ENCODE measurements at regions of chr2 and their contacts with region 1.

Region 1: DNA sequence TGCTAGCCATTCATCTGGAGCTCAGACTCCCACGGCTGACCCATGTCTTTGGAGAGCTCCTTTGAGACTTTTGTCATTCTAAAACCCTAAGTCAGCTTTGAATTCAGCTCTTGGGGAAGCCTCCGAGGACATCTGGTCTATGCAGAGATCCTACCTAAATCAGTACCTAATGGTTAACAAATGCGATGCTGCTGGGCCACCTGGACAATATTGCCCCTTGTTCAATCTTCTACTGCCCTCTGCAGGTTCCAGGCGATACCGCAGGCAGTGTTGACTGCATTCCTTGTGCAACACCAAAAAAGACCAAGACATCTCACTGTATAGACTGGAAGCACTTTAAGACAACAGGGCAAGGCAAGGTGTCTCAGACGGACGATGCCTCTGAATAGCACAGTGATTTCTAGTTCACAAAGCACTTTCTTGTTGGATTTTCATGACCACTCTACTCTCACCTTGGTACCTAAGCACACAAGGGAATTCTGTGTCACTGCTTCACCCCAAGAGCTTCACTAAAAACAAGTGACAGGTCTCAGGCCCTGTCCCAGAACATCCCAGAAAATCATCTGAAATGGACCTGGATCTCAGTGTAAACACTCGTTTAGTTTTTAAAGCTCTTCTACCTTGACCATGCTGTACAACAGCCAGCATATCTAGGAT is 80.9 kb downstream of the XDH start:
- DNase-seq: peak; percentile 84
- ATAC-seq: peak; percentile 90
- H3K4me3 ChIP-seq: no peak overlapping the region
- H3K4me3 Mint-ChIP-seq: no peak overlapping the region
- H3K27ac ChIP-seq: no peak overlapping the region
- H3K27ac Mint-ChIP-seq: no peak overlapping the region
- H3K4me1 ChIP-seq: peaks cover 0 to 9% of the 10 kb centered on the region in 2 donors
- H3K4me1 Mint-ChIP-seq: peaks cover 13% of the 10 kb centered on the region
- H3K27me3 ChIP-seq: peaks cover 0 to 6% (median 2%) of the 10 kb centered on the region in 4 experiments
- H3K27me3 Mint-ChIP-seq: peaks cover 5% of the 10 kb centered on the region
- CTCF ChIP-seq: peak; percentile 98

Region 2: GRCh38 chr2:30165050-30165520 is 1168.6 kb before region 1 on chr2:
- CTCF ChIA-PET with region 1: interaction called, 5 read pairs
- POLR2A ChIA-PET with region 1: no interaction called
- intact Hi-C with region 1: loop called (anchors 10 kb)
- DNase-seq: peak; percentile 87
- ATAC-seq: peak; percentile 100
- H3K4me3 ChIP-seq: no peak overlapping the region
- H3K4me3 Mint-ChIP-seq: no peak overlapping the region
- H3K27ac ChIP-seq: no peak overlapping the region
- H3K27ac Mint-ChIP-seq: no peak overlapping the region
- H3K4me1 ChIP-seq: peaks cover 8% of the 10 kb centered on the region in 2 donors
- H3K4me1 Mint-ChIP-seq: peaks cover 16% of the 10 kb centered on the region
- H3K27me3 ChIP-seq: no peaks in the 10 kb centered on the region
- H3K27me3 Mint-ChIP-seq: no peaks in the 10 kb centered on the region
- CTCF ChIP-seq: peak; percentile 85

Region 3: GRCh38 chr2:31089645-31090044 is 244.0 kb before region 1 on chr2:
- CTCF ChIA-PET with region 1: interaction called, 18 read pairs
- POLR2A ChIA-PET with region 1: no interaction called
- intact Hi-C with region 1: loop called (anchors 2 kb)
- DNase-seq: no peak
- ATAC-seq: no peak
- H3K4me3 ChIP-seq: no peak overlapping the region
- H3K4me3 Mint-ChIP-seq: no peak overlapping the region
- H3K27ac ChIP-seq: no peak overlapping the region
- H3K27ac Mint-ChIP-seq: no peak overlapping the region
- H3K4me1 ChIP-seq: no peaks in the 10 kb centered on the region
- H3K4me1 Mint-ChIP-seq: no peaks in the 10 kb centered on the region
- H3K27me3 ChIP-seq: no peaks in the 10 kb centered on the region
- H3K27me3 Mint-ChIP-seq: no peaks in the 10 kb centered on the region
- CTCF ChIP-seq: no peak

Region 4: DNA sequence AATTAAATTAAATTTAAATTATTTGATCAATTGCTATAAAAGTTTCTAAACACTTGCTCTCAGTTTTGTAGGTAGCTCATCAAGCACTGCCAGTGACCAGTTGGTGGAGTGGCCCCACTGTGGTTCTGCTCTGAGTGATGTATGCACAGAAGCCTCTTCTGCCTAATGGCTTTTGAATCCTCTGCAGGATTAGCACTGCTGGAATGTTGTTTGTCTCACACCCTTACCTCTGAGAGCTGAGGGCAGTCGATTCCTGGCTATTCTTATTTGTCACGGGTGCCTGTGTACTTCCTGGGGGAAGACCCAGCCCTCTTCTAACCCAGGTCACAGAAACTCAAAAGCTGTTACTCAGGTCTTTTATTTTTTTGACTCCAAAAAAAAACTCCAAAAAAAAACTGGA is 125.9 kb before region 1 on chr2:
- CTCF ChIA-PET with region 1: interaction called, 13 read pairs
- POLR2A ChIA-PET with region 1: interaction called, 5 read pairs
- intact Hi-C with region 1: no loop called
- DNase-seq: no peak
- ATAC-seq: peak; percentile 36
- H3K4me3 ChIP-seq: no peak overlapping the region
- H3K4me3 Mint-ChIP-seq: no peak overlapping the region
- H3K27ac ChIP-seq: peak overlapping the region in 1 of 2 donors; percentile 23
- H3K27ac Mint-ChIP-seq: no peak overlapping the region
- H3K4me1 ChIP-seq: peaks cover 13 to 16% of the 10 kb centered on the region in 2 donors
- H3K4me1 Mint-ChIP-seq: peaks cover 21% of the 10 kb centered on the region
- H3K27me3 ChIP-seq: no peaks in the 10 kb centered on the region
- H3K27me3 Mint-ChIP-seq: no peaks in the 10 kb centered on the region
- CTCF ChIP-seq: no peak

Region 5: DNA sequence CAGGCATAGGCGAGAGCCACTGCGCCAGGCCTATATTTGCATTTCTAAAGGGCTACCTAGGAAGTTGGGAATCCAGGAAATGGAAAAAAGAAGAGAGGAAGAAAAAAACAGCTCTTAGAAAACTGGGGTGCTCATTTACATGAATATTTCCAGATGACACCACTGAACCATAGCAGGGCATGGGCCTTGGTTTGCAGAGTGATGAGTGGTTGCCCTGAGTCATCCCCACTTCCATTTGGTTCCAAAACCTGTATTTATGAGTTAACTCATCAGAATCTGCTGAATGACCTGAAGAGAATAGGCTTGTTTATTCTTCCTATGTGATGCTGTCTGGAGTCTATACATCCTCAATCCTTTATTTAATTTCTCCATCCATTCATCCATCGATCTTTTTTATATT is 63.5 kb before region 1 on chr2:
- CTCF ChIA-PET with region 1: interaction called, 12 read pairs
- POLR2A ChIA-PET with region 1: interaction called, 5 read pairs
- intact Hi-C with region 1: no loop called
- DNase-seq: no peak
- ATAC-seq: no peak
- H3K4me3 ChIP-seq: no peak overlapping the region
- H3K4me3 Mint-ChIP-seq: no peak overlapping the region
- H3K27ac ChIP-seq: no peak overlapping the region
- H3K27ac Mint-ChIP-seq: peak overlapping the region; percentile 18
- H3K4me1 ChIP-seq: peaks cover 6 to 15% of the 10 kb centered on the region in 2 donors
- H3K4me1 Mint-ChIP-seq: peaks cover 27% of the 10 kb centered on the region
- H3K27me3 ChIP-seq: no peaks in the 10 kb centered on the region
- H3K27me3 Mint-ChIP-seq: peaks cover 5% of the 10 kb centered on the region
- CTCF ChIP-seq: no peak

Region 6: DNA sequence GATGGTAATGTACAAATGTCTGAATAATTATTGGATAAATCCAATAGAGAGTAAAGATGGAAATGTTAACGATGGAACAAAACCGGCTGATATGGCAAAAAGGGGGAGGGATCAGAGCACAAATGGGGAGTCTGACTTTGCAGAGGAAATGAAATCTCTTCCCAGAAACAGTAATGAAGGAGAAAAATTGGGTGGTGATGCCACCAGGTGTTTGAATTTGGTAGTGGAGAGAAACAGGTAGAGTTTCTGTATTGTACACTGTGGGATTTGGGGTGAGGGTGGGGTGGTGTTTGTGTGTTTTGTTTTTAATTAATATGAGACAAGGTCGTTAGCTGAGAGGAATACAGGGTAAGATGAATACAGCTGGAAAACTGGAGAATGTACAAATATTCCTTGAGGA is 101.3 kb after region 1 on chr2:
- CTCF ChIA-PET with region 1: no interaction called
- POLR2A ChIA-PET with region 1: no interaction called
- intact Hi-C with region 1: no loop called
- DNase-seq: no peak
- ATAC-seq: no peak
- H3K4me3 ChIP-seq: no peak overlapping the region
- H3K4me3 Mint-ChIP-seq: no peak overlapping the region
- H3K27ac ChIP-seq: no peak overlapping the region
- H3K27ac Mint-ChIP-seq: no peak overlapping the region
- H3K4me1 ChIP-seq: no peaks in the 10 kb centered on the region
- H3K4me1 Mint-ChIP-seq: no peaks in the 10 kb centered on the region
- H3K27me3 ChIP-seq: peaks cover 0 to 3% (median under 1%) of the 10 kb centered on the region in 4 experiments
- H3K27me3 Mint-ChIP-seq: peaks cover under 1% of the 10 kb centered on the region
- CTCF ChIP-seq: no peak

Region 7: DNA sequence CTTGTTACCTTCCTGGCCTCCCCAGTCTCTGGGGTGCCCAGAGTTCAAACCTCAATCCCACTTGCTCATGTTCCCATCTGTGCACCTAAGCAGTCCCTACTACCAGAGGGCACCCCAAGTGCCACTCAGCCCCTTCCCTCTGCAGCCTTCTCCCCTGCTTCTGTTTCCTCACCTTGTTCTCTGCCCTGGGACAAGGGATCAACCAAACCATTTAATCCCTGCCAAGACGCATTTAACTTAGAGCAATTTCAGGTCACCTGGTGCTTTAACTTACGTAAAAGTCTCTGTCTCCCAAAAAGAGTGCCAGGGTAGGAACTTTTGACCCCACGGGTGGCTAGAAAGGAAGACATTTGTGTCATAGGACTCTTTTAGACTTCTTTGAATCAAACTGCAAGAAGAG is 179.9 kb after region 1 on chr2:
- CTCF ChIA-PET with region 1: no interaction called
- POLR2A ChIA-PET with region 1: no interaction called
- intact Hi-C with region 1: no loop called
- DNase-seq: no peak
- ATAC-seq: no peak
- H3K4me3 ChIP-seq: no peak overlapping the region
- H3K4me3 Mint-ChIP-seq: no peak overlapping the region
- H3K27ac ChIP-seq: no peak overlapping the region
- H3K27ac Mint-ChIP-seq: no peak overlapping the region
- H3K4me1 ChIP-seq: no peaks in the 10 kb centered on the region
- H3K4me1 Mint-ChIP-seq: no peaks in the 10 kb centered on the region
- H3K27me3 ChIP-seq: no peaks in the 10 kb centered on the region
- H3K27me3 Mint-ChIP-seq: peaks cover 22% of the 10 kb centered on the region
- CTCF ChIP-seq: no peak

Region 8: DNA sequence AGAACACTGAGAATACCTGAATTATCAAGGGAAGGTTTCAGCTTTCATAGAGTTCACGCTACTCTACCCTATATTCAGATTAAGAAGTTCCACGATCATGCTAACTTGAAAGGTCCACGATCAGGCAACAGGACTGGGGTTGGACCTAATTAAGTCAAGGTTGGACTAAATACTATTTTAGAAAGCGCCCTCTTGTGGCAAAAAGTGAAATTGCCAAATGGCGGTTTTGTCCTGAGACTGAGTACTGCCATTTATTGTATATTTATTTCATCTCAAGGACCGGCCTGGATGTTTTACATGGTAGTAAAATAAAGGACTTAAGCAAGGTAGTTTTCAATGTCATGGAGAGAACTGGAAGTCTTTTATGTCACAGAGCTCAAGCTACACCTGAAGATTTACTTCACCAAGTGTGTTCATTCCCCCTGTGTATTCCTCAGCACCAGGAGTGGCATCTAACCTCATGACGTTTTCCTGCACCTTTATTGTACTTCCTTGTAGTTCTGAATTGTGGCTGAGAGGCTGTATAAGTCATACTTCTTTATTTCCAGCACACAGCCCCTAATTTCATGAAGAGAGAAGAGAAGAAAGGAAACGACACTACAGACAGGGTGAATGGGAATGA is 190.3 kb after region 1 on chr2:
- CTCF ChIA-PET with region 1: interaction called, 12 read pairs
- POLR2A ChIA-PET with region 1: no interaction called
- intact Hi-C with region 1: no loop called
- DNase-seq: peak; percentile 64
- ATAC-seq: peak; percentile 64
- H3K4me3 ChIP-seq: no peak overlapping the region
- H3K4me3 Mint-ChIP-seq: no peak overlapping the region
- H3K27ac ChIP-seq: no peak overlapping the region
- H3K27ac Mint-ChIP-seq: no peak overlapping the region
- H3K4me1 ChIP-seq: no peaks in the 10 kb centered on the region
- H3K4me1 Mint-ChIP-seq: no peaks in the 10 kb centered on the region
- H3K27me3 ChIP-seq: peaks cover 0 to 6% (median 2%) of the 10 kb centered on the region in 4 experiments
- H3K27me3 Mint-ChIP-seq: peaks cover 37% of the 10 kb centered on the region
- CTCF ChIP-seq: peak; percentile 92

Region 9: DNA sequence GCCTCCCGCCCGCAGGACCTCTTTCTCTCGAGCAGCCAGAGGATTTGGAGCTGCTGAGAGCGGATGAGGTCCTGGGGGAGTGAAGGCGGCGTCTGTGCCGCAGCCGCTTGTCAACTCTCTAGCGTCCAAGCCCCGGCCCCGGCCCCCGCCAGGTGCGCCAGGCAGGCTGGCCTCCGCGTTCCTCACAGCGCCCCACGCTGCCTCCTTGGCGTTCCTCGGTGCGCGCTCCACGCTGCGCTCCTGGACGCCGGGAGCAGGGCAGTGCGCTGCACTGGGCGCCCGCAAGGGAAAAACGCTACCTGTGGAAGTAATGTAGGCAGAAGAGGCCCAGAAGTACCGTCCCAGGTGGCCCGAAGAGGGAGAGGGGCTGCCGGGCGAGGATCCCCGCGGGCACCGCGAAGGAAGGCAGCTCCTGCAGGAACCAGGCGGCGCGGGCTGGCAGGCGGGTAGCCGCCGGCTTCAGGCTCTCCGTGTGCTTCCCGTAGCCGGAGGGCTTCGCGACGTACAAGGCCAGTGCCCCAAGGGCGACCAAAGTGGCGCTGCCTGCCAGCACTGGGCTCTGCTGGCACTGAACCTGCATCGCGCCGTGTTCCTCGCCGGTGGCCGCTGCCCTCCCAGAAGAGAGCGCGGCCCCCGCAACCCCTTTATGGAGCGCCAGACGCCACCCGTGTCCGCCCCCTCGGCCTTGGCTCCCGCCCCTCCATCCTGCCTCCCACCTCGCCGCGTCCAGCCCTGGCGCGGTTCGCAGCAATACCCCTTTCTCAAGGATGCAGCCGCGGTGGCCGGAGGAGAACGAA is 246.9 kb after region 1 on chr2 and contains the start of gene SRD5A2:
- CTCF ChIA-PET with region 1: no interaction called
- POLR2A ChIA-PET with region 1: no interaction called
- intact Hi-C with region 1: no loop called
- DNase-seq: no peak
- ATAC-seq: no peak
- H3K4me3 ChIP-seq: no peak within 1 kb of the TSS
- H3K4me3 Mint-ChIP-seq: no peak within 1 kb of the TSS
- H3K27ac ChIP-seq: no peak within 1 kb of the TSS
- H3K27ac Mint-ChIP-seq: no peak within 1 kb of the TSS
- H3K4me1 ChIP-seq: no peaks in the 10 kb centered on the region
- H3K4me1 Mint-ChIP-seq: no peaks in the 10 kb centered on the region
- H3K27me3 ChIP-seq: peaks cover 0 to 26% (median 11%) of the 10 kb centered on the region in 4 experiments
- H3K27me3 Mint-ChIP-seq: peaks cover 52% of the 10 kb centered on the region
- CTCF ChIP-seq: no peak
- total RNA-seq, gene SRD5A2: not detected in 2 replicates

Measured in B cell (primary cell).